PC-3 (cell line): ENCODE measurements at regions of chr1 and their contacts with region 1.

Region 1: DNA sequence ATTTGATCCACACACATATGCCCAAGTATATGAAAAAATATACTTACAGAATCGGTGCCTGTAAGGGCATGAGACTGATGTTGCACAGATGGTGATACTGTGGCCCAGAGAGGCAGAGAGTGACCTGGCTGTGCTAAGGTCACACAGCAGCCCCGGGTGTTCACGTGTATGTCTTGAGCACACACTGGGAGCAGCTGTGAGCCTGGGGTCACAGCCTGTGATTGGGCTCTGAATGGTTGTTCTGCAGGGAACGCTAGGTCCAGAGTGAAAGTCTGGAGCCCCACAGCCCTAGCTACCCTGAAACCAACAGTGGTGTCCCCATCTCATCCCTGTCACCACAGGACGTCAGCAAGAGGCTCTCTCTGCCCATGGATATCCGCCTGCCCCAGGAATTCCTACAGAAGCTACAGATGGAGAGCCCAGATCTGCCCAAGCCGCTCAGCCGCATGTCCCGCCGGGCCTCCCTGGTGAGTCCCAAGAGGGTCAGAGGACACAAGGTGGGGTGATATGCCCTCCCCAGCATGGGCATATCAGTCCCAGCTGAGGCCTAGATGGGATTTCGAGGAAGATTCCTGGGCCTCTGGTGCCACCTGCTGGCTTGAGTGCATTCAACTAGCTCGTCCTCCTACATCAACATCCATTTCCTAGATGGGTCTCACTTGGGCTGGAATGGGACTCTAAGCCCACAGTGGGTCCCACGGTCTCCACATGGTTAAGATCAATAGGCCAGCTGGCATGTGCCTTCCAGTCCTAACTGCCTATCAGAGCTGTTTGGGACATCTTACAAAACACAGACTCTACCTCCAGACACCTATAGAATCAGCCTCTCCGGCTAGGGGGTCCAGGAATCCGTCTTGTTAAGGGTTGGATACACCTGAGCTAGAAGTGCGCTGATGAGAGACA is 19.7 kb downstream of the CDK18 start:
- DNase-seq: peak; percentile 90
- ATAC-seq: peak; percentile 62
- H3K4me3 ChIP-seq: no peak overlapping the region
- H3K27ac ChIP-seq: no peak overlapping the region
- H3K4me1 ChIP-seq: peaks cover 6% of the 10 kb centered on the region; the same call in 1 of the 2 replicates
- H3K27me3 ChIP-seq: no peaks in the 10 kb centered on the region
- CTCF ChIP-seq: peak; percentile 97

Region 2: DNA sequence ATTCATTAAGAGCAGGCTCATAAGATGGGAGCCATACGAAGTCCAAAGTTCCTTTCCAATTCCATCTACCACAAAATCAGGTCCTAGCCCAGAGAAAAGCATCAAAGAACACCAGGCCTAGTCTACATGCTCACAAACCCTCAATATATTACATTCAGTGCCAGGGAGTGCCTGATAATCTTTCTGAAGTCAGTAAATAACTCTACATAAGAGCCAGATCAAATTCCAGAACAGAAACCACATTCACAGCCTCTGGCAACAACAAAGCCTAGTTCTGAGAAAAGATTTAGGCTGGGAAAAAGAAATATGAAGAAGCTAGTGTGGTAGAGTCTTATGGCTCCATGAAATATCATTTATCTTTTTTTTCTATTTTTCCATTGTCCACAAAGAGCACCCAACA is 361.8 kb before region 1 on chr1:
- CTCF ChIA-PET with region 1: no interaction called
- POLR2A ChIA-PET with region 1: no interaction called
- intact Hi-C with region 1: no loop called
- DNase-seq: no peak
- ATAC-seq: no peak
- H3K4me3 ChIP-seq: no peak overlapping the region
- H3K27ac ChIP-seq: no peak overlapping the region
- H3K4me1 ChIP-seq: no peaks in the 10 kb centered on the region
- H3K27me3 ChIP-seq: no peaks in the 10 kb centered on the region
- CTCF ChIP-seq: no peak

Region 3: GRCh38 chr1:205335643-205336091 is 188.5 kb before region 1 on chr1:
- CTCF ChIA-PET with region 1: interaction called, 10 read pairs
- POLR2A ChIA-PET with region 1: no interaction called
- intact Hi-C with region 1: loop called (anchors 1 kb)
- DNase-seq: peak; percentile 93
- ATAC-seq: peak; percentile 98
- H3K4me3 ChIP-seq: no peak overlapping the region
- H3K27ac ChIP-seq: no peak overlapping the region
- H3K4me1 ChIP-seq: no peaks in the 10 kb centered on the region
- H3K27me3 ChIP-seq: no peaks in the 10 kb centered on the region
- CTCF ChIP-seq: peak; percentile 99

Region 4: DNA sequence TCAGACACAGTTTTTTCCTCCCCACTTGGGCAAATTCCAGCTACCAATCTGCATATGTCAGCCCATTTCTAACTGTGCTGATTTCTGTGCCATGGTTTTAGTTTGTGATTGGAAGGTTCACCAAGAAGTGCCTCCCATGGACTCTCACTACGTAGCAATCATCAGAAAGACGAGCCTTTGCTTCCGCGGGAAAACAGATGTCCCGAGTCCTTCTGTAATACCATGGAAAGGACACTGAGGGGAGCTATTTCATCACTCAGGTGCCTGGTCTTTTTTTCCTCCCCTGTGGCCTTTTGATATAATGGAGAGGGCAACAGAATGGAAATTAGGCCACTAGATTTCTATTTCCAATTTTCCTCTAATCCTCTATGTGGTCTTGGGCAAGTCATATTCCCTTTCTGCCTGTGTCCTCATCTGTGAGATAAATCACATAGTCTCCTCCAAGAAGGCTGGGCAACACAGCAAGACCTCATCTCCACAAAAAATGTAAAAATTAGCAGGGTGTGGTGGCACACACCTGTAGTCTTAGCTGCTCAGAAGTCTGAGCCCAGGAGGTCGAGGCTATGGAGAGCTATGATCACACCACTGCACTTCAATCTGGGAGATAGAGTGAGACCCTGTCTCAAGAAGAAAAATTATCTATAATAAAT is 127.0 kb before region 1 on chr1:
- CTCF ChIA-PET with region 1: interaction called, 10 read pairs
- POLR2A ChIA-PET with region 1: no interaction called
- intact Hi-C with region 1: loop called (anchors 1 kb)
- DNase-seq: peak; percentile 86
- ATAC-seq: peak; percentile 82
- H3K4me3 ChIP-seq: no peak overlapping the region
- H3K27ac ChIP-seq: no peak overlapping the region
- H3K4me1 ChIP-seq: no peaks in the 10 kb centered on the region
- H3K27me3 ChIP-seq: peaks cover 6% of the 10 kb centered on the region; the same call in 1 of the 2 replicates
- CTCF ChIP-seq: peak; percentile 96

Region 5: GRCh38 chr1:205422993-205423625 is 101.0 kb before region 1 on chr1:
- CTCF ChIA-PET with region 1: interaction called, 6 read pairs
- POLR2A ChIA-PET with region 1: no interaction called
- intact Hi-C with region 1: loop called (anchors 1 kb)
- DNase-seq: peak; percentile 50
- ATAC-seq: peak; percentile 37; the same call in 1 of the 2 replicates
- H3K4me3 ChIP-seq: no peak overlapping the region
- H3K27ac ChIP-seq: no peak overlapping the region
- H3K4me1 ChIP-seq: no peaks in the 10 kb centered on the region
- H3K27me3 ChIP-seq: peaks cover 71% of the 10 kb centered on the region
- CTCF ChIP-seq: peak; percentile 67

Region 6: DNA sequence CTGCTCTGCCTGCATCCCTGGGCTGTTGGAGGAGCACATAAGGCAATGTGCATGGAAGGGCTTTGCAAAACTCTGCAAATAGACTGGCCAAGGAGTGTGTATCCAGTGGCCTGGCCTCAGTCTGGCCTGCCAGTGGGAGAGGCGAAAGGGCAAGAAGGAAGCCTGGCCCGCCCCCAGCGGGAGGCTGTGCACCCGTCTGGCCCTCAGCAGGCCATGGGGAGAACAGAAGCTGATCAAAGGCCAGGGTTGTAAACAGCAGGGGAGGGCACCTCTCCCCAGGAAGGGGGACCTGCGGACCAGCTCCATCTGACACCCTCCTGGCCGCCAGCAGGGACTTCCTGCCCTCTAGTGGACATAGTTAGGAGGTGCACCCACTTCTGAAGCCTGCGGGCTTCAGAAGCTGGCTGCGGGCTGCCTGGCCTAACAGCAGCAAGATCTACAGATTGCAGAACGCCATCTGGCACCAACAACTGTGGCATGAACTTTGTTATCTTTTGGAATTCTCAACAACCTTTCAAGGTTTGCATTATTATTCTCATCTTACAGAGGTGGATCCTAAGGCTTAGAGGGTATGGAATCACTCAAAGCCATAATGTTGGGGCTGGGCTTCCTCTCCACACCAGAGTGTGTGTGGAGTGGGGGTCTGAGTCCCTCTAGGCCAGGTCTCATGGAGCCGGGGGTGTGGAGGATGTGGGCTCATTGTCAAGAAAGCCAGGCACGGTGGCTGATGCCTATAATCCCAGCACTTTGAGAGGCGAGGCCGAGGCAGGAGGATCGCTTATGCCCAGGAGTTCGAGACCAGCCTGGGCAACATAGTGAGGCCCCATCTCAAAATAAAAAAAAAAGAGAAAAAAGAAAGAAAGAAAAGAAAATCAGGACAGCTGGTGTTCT is 38.6 kb before region 1 on chr1:
- CTCF ChIA-PET with region 1: interaction called, 38 read pairs
- POLR2A ChIA-PET with region 1: no interaction called
- intact Hi-C with region 1: loop called (anchors 1 kb)
- DNase-seq: peak; percentile 89
- ATAC-seq: peak; percentile 82
- H3K4me3 ChIP-seq: no peak overlapping the region
- H3K27ac ChIP-seq: no peak overlapping the region
- H3K4me1 ChIP-seq: no peaks in the 10 kb centered on the region
- H3K27me3 ChIP-seq: peaks cover 7% of the 10 kb centered on the region; the same call in 1 of the 2 replicates
- CTCF ChIP-seq: peak; percentile 99

Region 7: GRCh38 chr1:205700865-205701401 is 176.8 kb after region 1 on chr1:
- CTCF ChIA-PET with region 1: no interaction called
- POLR2A ChIA-PET with region 1: no interaction called
- intact Hi-C with region 1: no loop called
- DNase-seq: no peak
- ATAC-seq: no peak
- H3K4me3 ChIP-seq: no peak overlapping the region
- H3K27ac ChIP-seq: no peak overlapping the region
- H3K4me1 ChIP-seq: peaks cover 11% of the 10 kb centered on the region
- H3K27me3 ChIP-seq: no peaks in the 10 kb centered on the region
- CTCF ChIP-seq: no peak